ENCODE measurements at regions of chr3 and their contacts with region 1.

Region 1: GRCh38 chr3:9704347-9705322 is 1.0 kb downstream of the CPNE9 start:
- DNase-seq: peak; percentile 31 to 63
- ATAC-seq: peak; percentile 28 to 60 (median 50)
- H3K4me3 ChIP-seq: peak overlapping the region; percentile 48
- H3K27ac ChIP-seq: no peak overlapping the region
- H3K4me1 ChIP-seq: peaks cover 12% of the 10 kb centered on the region
- H3K27me3 ChIP-seq: peaks cover 0 to 11% (median 9%) of the 10 kb centered on the region in 3 donors
- CTCF ChIP-seq: no peak

Region 2: GRCh38 chr3:10232137-10232536 is 527.5 kb after region 1 on chr3:
- intact Hi-C with region 1: loop called in 1 of 2 experiments (anchors 10 kb)
- DNase-seq: no peak
- ATAC-seq: peak in 2 of 4 donors; percentile 25 to 32
- H3K4me3 ChIP-seq: no peak overlapping the region
- H3K27ac ChIP-seq: no peak overlapping the region
- H3K4me1 ChIP-seq: no peaks in the 10 kb centered on the region
- H3K27me3 ChIP-seq: no peaks in the 10 kb centered on the region
- CTCF ChIP-seq: no peak